ENCODE measurements at regions of chr19 and their contacts with region 1.

Region 1: DNA sequence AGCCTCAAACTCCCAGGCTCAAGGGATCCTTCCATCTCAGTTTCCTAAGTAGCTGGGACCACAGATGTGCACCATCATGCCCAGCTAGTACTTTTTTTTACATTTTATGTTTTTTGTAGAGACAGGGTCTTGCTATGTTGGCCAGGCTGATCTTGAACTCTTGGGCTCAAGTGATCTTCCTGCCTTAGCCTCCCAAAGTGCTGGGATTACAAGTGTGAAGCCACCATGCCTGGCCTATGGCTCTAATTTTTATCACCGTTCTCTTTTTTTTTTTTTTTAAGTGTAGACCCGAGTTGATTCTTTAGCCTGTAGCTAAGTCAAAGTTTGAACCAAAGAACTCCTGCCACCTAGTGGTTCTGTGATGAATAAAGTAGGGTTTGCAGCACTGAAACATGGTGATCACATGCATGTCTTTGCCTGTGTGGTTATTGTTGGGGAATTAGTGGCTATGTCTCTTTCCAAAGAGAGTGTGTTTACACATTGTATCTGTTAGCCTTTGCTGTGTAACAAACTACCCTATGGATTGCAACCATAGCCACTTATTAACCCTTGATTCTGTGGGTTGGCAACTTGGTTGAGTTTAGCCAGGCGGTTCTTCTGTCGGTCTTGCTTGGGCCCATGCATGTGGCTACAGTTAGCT is 11.6 kb downstream of the NFILZ start:
- DNase-seq: no peak
- H3K4me3 ChIP-seq: no peak overlapping the region
- H3K27ac ChIP-seq: no peak overlapping the region
- H3K4me1 ChIP-seq: no peaks in the 10 kb centered on the region
- H3K27me3 ChIP-seq: no peaks in the 10 kb centered on the region
- CTCF ChIP-seq: peak in 2 of 3 experiments; percentile 45 to 53
- POLR2A ChIP-seq: no peak

Region 2: GRCh38 chr19:8578642-8579265 is 63.3 kb before region 1 on chr19:
- intact Hi-C with region 1: loop called (anchors 1 kb)
- DNase-seq: no peak
- H3K4me3 ChIP-seq: no peak overlapping the region
- H3K27ac ChIP-seq: no peak overlapping the region
- H3K4me1 ChIP-seq: peaks cover 23% of the 10 kb centered on the region
- H3K27me3 ChIP-seq: no peaks in the 10 kb centered on the region
- CTCF ChIP-seq: peak; percentile 69 to 78 (median 69)
- POLR2A ChIP-seq: no peak